CD4-positive, alpha-beta memory T cell (primary cell): ENCODE measurements at regions of chr22 and their contacts with region 1.

Region 1: DNA sequence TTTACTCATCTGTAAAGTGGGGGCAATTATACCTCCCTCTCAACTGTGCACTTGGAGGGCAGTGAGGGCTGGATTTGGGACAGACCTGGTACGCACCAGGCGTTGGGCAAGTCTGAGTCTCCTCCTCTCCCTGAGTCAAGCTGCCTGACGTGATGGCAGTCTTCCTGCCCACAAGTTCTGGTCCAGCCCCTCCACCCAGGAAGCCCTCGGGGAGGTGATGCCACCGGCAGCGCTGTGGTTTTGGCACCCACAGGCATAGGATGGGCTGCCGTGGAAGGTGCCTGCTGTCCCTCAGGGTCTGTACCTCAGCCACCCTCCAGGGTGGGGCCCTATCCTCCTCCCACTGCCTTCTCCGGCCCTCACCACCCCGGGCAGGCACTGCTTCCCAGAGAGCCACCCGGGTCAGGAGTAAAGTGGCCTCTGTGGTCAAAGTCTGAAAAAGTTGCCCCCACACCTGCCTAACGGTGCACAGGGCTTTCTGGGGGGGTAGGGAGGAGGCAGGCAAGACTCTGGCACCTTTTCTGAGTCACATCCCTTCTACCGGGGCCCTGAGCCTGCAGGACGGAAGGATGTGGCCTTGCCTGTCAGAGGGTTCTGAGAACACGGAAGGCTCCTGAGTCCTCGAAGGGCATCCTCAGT is 6.5 kb upstream of the APOBEC3H start:
- DNase-seq: peak; percentile 92 to 96 (median 95)
- H3K4me3 ChIP-seq: peak overlapping the region; percentile 59 to 64
- H3K4me3 Mint-ChIP-seq: peak overlapping the region; percentile 72 to 88 (median 82)
- H3K27ac ChIP-seq: peak overlapping the region; percentile 98
- H3K27ac Mint-ChIP-seq: peak overlapping the region; percentile 97 to 100 (median 99)
- H3K4me1 ChIP-seq: peaks cover 94% of the 10 kb centered on the region
- H3K4me1 Mint-ChIP-seq: peaks cover 59 to 94% (median 76%) of the 10 kb centered on the region in 4 donors
- H3K27me3 ChIP-seq: no peaks in the 10 kb centered on the region
- H3K27me3 Mint-ChIP-seq: no peaks in the 10 kb centered on the region

Region 2: DNA sequence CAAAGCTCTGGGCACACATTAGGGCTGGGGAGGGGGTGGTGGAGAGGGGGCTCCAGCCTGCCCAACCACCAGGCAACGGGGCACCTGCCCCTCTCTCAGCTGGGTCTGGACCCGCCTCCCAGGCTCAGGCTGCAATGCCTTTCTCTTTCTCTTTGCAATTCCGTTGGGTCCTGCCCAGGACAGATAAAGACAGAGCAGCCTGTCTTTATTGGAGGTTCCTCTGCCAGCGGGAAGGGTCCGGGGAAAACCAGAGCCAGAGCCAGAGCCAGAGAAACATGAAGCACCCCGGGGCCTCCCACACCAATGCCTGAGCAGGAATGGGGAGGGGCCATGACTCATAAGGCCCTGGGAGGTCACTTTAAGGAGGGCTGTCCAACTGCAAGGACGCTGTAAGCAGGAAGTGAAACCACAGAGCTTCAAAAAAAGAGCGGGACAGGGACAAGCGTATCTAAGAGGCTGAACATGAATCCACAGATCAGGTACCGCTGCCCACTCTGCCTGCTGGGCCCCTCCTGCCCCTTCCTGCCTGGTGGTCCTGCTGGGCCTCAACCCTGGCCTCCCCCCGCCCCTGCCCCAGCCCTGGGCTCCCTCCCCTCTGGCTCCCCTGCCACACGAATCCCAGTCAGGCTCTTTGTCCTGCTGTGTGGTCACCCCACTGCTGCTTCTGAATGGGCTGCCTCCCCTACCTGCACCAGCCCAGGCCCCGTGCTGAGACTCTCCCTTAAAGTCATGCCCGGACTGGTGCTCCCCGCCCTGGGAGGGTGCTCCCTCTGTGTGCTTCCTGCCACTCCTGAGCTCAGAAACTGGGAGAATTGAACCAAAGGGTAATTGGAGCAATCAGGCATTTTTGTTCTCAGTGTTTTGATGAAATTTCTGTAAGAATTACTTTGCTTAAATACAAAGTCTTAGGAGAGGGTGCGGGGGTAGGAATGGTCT is 108.3 kb before region 1 on chr22 and contains the start of gene APOBEC3B:
- CTCF ChIA-PET with region 1: no interaction called
- POLR2A ChIA-PET with region 1: no interaction called
- intact Hi-C with region 1: loop called (anchors 1 kb)
- DNase-seq: peak; percentile 43 to 89 (median 65)
- H3K4me3 ChIP-seq: peak within 1 kb of the TSS; percentile 28 to 36
- H3K4me3 Mint-ChIP-seq: peak within 1 kb of the TSS; percentile 85 to 94 (median 87)
- H3K27ac ChIP-seq: peak within 1 kb of the TSS; percentile 21
- H3K27ac Mint-ChIP-seq: peak within 1 kb of the TSS; percentile 48 to 97 (median 82)
- H3K4me1 ChIP-seq: peaks cover 43% of the 10 kb centered on the region
- H3K4me1 Mint-ChIP-seq: peaks cover 25 to 52% (median 29%) of the 10 kb centered on the region in 4 donors
- H3K27me3 ChIP-seq: no peaks in the 10 kb centered on the region
- H3K27me3 Mint-ChIP-seq: peaks cover 0 to 1% of the 10 kb centered on the region in 2 donors
- total RNA-seq, gene APOBEC3B: 0.32 to 0.64 TPM

Region 3: DNA sequence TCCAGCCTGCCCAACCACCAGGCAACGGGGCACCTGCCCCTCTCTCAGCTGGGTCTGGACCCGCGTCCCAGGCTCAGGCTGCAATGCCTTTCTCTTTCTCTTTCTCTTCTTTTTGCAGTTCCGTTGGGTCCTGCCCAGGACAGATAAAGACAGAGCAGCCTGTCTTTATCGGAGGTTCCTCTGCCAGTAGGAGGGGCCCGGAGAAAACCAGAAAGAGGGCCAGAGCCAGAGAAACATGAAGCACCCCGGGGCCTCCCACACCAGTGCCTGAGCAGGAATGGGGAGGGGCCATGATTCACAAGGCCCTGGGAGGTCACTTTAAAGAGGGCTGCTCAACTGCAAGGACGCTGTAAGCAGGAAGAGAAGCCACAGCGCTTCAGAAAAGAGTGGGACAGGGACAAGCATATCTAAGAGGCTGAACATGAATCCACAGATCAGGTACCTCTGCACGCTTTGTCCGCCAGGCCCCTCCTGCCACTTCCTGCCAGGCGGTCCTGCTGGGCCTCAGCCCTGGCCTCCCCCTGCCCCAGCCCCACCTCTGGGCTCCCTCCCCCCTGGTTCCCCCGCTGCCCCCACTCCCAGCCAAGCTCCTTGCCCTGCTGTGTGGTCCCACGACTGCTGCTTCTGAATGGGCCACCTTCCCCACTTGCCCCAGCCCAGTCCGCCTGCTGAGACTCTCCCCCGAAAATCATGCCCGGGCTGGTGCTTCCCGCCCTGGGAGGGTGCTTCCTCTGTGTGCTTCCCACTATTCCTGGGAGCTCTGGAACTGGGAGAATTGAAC is 76.4 kb before region 1 on chr22 and contains the start of gene APOBEC3C:
- CTCF ChIA-PET with region 1: interaction called, 3 read pairs
- POLR2A ChIA-PET with region 1: interaction called, 16 read pairs
- intact Hi-C with region 1: no loop called
- DNase-seq: peak; percentile 71 to 86 (median 72)
- H3K4me3 ChIP-seq: peak within 1 kb of the TSS; percentile 70 to 91
- H3K4me3 Mint-ChIP-seq: peak within 1 kb of the TSS; percentile 89 to 98 (median 94)
- H3K27ac ChIP-seq: peak within 1 kb of the TSS; percentile 65
- H3K27ac Mint-ChIP-seq: peak within 1 kb of the TSS; percentile 86 to 97 (median 95)
- H3K4me1 ChIP-seq: peaks cover 36% of the 10 kb centered on the region
- H3K4me1 Mint-ChIP-seq: peaks cover 24 to 62% (median 44%) of the 10 kb centered on the region in 4 donors
- H3K27me3 ChIP-seq: no peaks in the 10 kb centered on the region
- H3K27me3 Mint-ChIP-seq: no peaks in the 10 kb centered on the region
- total RNA-seq, gene APOBEC3C: 42.4 to 43.8 TPM

Region 4: GRCh38 chr22:39021552-39022250 is 68.8 kb before region 1 on chr22:
- CTCF ChIA-PET with region 1: no interaction called
- POLR2A ChIA-PET with region 1: interaction called, 4 read pairs
- intact Hi-C with region 1: loop called (anchors 5 kb)
- DNase-seq: no peak
- H3K4me3 ChIP-seq: peak overlapping the region; percentile 44 to 54
- H3K4me3 Mint-ChIP-seq: peak overlapping the region; percentile 90 to 96 (median 93)
- H3K27ac ChIP-seq: peak overlapping the region; percentile 81
- H3K27ac Mint-ChIP-seq: peak overlapping the region; percentile 91 to 98 (median 97)
- H3K4me1 ChIP-seq: peaks cover 52% of the 10 kb centered on the region
- H3K4me1 Mint-ChIP-seq: peaks cover 29 to 80% (median 51%) of the 10 kb centered on the region in 4 donors
- H3K27me3 ChIP-seq: no peaks in the 10 kb centered on the region
- H3K27me3 Mint-ChIP-seq: no peaks in the 10 kb centered on the region

Region 5: DNA sequence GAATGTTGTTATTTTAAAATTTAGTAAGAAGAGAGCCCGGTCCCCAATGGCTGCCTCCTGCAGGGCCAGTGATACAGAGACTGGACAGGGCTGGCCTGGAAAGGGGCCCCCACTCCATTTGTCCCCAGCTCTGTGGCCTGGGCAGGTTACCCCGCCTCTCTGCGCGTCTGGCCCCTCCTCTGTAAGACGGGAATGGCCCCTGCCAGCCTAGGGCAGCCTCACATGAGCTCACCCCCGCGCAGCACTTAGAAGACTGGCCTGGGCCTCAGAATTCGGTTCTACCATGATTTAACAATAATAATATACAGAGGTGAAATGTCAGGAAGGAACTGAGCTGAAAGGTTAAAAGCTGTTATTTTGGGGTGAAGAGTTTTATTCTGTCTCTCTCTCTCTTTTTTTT is 12.2 kb before region 1 on chr22:
- CTCF ChIA-PET with region 1: interaction called, 3 read pairs
- POLR2A ChIA-PET with region 1: interaction called, 39 read pairs
- intact Hi-C with region 1: no loop called
- DNase-seq: no peak
- H3K4me3 ChIP-seq: peak overlapping the region in 1 of 2 donors; percentile 86
- H3K4me3 Mint-ChIP-seq: peak overlapping the region; percentile 89 to 93 (median 90)
- H3K27ac ChIP-seq: peak overlapping the region; percentile 96
- H3K27ac Mint-ChIP-seq: peak overlapping the region; percentile 93 to 97 (median 95)
- H3K4me1 ChIP-seq: peaks cover 51% of the 10 kb centered on the region
- H3K4me1 Mint-ChIP-seq: peaks cover 22 to 69% (median 50%) of the 10 kb centered on the region in 4 donors
- H3K27me3 ChIP-seq: no peaks in the 10 kb centered on the region
- H3K27me3 Mint-ChIP-seq: no peaks in the 10 kb centered on the region

Region 6: DNA sequence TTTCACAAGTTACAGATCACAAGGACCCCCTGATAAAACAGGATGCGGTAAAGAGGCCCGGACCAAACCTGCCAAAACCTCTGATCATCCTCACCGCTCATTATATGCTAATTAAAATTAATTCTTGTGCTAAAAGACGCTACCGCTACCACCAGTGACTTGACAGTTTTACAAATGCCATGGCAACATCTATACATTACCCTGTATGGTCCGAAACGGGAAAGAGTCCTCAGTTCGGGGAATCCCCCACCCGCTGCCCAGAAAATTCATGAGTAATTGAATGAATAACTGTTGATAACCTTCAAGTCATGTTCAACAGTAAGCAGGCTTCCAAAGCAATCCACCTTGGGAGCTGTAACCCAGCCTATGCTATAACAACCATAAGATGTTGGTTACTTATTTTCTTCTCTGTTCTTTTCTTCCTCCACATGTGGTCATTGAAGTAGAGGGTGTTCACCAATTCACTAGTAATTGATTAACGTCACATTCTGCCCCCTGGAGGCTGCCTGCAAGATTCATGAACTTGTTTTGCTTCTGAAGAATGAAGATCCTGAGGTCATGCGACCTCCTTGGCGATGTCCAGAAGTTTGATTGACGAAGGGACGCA is 27.1 kb after region 1 on chr22:
- CTCF ChIA-PET with region 1: no interaction called
- POLR2A ChIA-PET with region 1: interaction called, 4 read pairs
- intact Hi-C with region 1: loop called (anchors 2 kb)
- DNase-seq: peak; percentile 69 to 88 (median 73)
- H3K4me3 ChIP-seq: no peak overlapping the region
- H3K4me3 Mint-ChIP-seq: peak overlapping the region; percentile 53 to 82 (median 74)
- H3K27ac ChIP-seq: peak overlapping the region; percentile 52
- H3K27ac Mint-ChIP-seq: peak overlapping the region; percentile 77 to 92 (median 88)
- H3K4me1 ChIP-seq: peaks cover 35% of the 10 kb centered on the region
- H3K4me1 Mint-ChIP-seq: peaks cover 29 to 49% (median 34%) of the 10 kb centered on the region in 4 donors
- H3K27me3 ChIP-seq: no peaks in the 10 kb centered on the region
- H3K27me3 Mint-ChIP-seq: no peaks in the 10 kb centered on the region